Naive thymus-derived CD4-positive, alpha-beta T cell (primary cell): ENCODE measurements at regions of chr10 and their contacts with region 1.

Region 1: DNA sequence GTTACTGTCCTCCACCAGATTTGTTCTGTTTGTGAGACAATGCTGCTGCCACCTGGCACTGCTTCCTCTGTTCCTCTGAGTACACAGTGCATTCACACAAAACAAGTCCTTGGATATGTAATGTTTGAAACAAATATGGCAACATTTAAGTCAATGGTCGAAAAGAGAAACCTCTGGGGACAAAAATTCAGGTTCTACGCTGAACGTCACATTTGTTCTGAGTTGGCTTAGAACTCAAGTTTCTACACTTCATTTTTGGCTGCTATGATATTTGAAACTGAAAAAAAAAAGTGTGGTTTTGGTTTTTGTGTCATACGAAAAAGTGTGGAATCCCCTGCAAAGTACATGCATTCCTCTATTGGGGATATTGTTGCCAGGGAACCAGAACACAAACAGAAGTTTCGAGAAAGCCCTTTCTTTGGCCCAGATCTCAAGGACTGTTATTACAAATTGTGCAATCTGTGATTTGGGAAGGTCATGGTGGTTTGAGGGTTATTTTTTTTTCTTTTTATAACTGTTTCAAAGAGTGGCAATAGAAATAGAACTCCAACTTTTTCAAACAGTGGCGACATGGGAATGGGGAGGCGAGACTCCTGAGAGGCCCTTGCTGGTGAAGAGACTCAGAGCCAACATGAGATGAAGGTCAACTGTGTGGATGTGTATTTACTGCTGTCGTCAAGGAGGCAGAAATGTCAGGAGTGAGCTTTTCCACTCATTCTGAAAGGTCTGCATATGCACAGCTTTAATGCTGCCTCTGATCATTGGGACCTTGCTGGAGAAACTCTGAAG is 127.5 kb downstream of the CUBN start:
- DNase-seq: peak in 5 of 9 donors; percentile 25 to 79 (median 38)
- ATAC-seq: peak; percentile 59
- H3K4me3 ChIP-seq: no peak overlapping the region
- H3K4me3 Mint-ChIP-seq: peak overlapping the region in 9 of 10 donors; percentile 30 to 69 (median 63)
- H3K27ac ChIP-seq: peak overlapping the region; percentile 67
- H3K27ac Mint-ChIP-seq: peak overlapping the region; percentile 65 to 98 (median 85)
- H3K4me1 ChIP-seq: peaks cover 20 to 35% of the 10 kb centered on the region in 2 donors
- H3K4me1 Mint-ChIP-seq: peaks cover 21 to 79% (median 57%) of the 10 kb centered on the region in 7 donors
- H3K27me3 ChIP-seq: no peaks in the 10 kb centered on the region
- H3K27me3 Mint-ChIP-seq: peaks cover 0 to 66% (median 0%) of the 10 kb centered on the region in 5 donors

Region 2: GRCh38 chr10:16904639-16905061 is 97.5 kb before region 1 on chr10:
- CTCF ChIA-PET with region 1: no interaction called
- POLR2A ChIA-PET with region 1: no interaction called
- intact Hi-C with region 1: loop called in 1 of 2 experiments (anchors 5 kb)
- DNase-seq: no peak
- ATAC-seq: no peak
- H3K4me3 ChIP-seq: no peak overlapping the region
- H3K4me3 Mint-ChIP-seq: no peak overlapping the region
- H3K27ac ChIP-seq: no peak overlapping the region
- H3K27ac Mint-ChIP-seq: no peak overlapping the region
- H3K4me1 ChIP-seq: no peaks in the 10 kb centered on the region
- H3K4me1 Mint-ChIP-seq: peaks cover 0 to 7% (median 4%) of the 10 kb centered on the region in 7 donors
- H3K27me3 ChIP-seq: no peaks in the 10 kb centered on the region
- H3K27me3 Mint-ChIP-seq: peaks cover 0 to 7% (median 0%) of the 10 kb centered on the region in 5 donors

Region 3: GRCh38 chr10:17144757-17145156 is 142.6 kb after region 1 on chr10:
- CTCF ChIA-PET with region 1: no interaction called
- POLR2A ChIA-PET with region 1: no interaction called
- intact Hi-C with region 1: loop called in 1 of 2 experiments (anchors 1 kb)
- DNase-seq: peak in 1 of 9 donors; percentile 56
- ATAC-seq: no peak
- H3K4me3 ChIP-seq: no peak overlapping the region
- H3K4me3 Mint-ChIP-seq: peak overlapping the region in 1 of 10 donors; percentile 46
- H3K27ac ChIP-seq: no peak overlapping the region
- H3K27ac Mint-ChIP-seq: peak overlapping the region in 4 of 9 donors; percentile 34 to 82 (median 74)
- H3K4me1 ChIP-seq: peaks cover 0 to 5% of the 10 kb centered on the region in 2 donors
- H3K4me1 Mint-ChIP-seq: peaks cover 4 to 32% (median 22%) of the 10 kb centered on the region in 7 donors
- H3K27me3 ChIP-seq: no peaks in the 10 kb centered on the region
- H3K27me3 Mint-ChIP-seq: peaks cover 0 to 2% (median 0%) of the 10 kb centered on the region in 5 donors

Region 4: DNA sequence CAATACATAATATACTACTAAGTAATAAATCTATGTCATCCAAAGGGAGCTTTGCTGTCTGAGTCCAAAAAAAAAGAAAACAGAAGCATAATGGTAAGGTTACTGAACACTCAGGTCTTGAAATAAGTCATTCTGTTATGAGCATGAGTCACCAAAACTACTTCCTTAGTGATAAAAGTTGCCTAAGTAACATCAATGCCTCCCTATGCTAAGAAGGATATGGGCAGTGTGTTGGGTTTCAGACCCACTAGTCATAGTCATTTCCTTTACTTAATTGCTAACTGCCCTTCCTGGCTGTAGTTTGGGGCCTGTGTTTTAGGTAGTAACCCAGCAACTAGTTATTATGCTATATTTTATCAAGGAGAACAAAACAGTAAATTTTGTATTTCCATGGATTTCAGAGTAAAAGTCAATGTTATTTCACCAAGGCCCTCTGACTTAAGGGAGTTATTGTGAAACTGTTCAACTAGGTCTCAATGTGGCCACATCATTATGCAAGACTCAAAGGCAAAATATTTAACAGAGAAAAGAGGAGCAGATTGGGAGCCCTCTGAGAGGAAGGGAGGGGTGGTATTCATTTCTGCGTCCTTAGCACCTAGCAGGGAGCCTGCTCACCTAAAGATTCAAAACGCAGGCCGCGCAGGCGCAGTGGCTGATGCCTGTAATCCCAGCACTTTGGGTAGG is 214.2 kb after region 1 on chr10:
- CTCF ChIA-PET with region 1: no interaction called
- POLR2A ChIA-PET with region 1: no interaction called
- intact Hi-C with region 1: loop called in 1 of 2 experiments (anchors 1 kb)
- DNase-seq: no peak
- ATAC-seq: peak; percentile 91
- H3K4me3 ChIP-seq: no peak overlapping the region
- H3K4me3 Mint-ChIP-seq: peak overlapping the region in 2 of 10 donors; percentile 36 to 39
- H3K27ac ChIP-seq: no peak overlapping the region
- H3K27ac Mint-ChIP-seq: peak overlapping the region in 5 of 9 donors; percentile 32 to 95 (median 50)
- H3K4me1 ChIP-seq: peaks cover 5 to 11% of the 10 kb centered on the region in 2 donors
- H3K4me1 Mint-ChIP-seq: peaks cover 0 to 47% (median 5%) of the 10 kb centered on the region in 7 donors
- H3K27me3 ChIP-seq: no peaks in the 10 kb centered on the region
- H3K27me3 Mint-ChIP-seq: no peaks in the 10 kb centered on the region